Activated naive CD4-positive, alpha-beta T cell treated with anti-CD3 and anti-CD28 coated beads, Interleukin-2, amount 10 ng/mL, durations not matched to agents 7 days and 5 days (primary cell): ENCODE measurements at regions of chr3 and their contacts with region 1.

Region 1: DNA sequence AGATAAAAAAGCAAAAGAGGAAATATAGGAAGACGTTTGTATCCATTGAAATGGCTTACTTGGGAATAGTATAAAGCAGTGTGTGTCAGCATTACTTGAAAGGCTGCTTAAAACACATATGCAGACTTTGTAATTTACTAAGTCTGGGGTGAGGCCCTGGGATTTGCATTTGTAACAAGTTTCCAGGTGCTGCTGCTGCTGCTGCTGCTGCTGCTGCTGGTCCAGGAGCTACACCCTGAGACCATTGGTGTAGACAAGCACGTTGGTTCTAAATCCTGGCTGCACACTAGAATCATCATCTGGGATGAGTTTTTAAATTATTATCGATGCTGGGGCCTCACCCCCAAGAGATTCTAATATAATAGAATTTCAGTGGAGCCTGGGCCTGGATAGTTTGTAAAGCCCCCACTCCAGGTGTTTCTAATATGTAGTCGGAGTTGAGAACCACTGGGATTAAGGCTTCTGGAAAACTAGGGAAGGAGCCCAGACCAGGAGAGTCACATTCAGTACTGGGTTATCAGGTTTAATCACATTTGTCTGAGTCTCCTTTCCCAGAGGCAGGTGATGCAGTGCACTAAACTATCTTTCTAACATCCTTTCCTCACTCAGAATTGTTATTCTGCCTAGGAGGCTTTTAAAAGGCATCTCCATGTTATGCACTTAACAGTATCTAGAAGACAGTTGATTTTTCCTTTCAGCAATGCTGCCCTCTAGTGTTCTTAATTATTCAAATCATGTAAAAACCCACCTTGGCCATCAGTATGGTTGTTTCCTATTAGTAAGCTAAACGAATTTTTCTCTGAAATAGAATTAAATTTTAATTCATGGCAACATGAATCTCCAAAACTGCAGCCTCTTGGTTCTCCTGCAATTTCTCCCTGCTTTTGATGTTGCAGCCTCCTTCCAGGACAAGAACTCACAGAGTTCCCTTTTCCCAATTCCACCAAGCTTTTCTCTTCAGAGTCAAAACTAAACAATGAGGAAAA is 45.4 kb downstream of the SSR3 start:
- DNase-seq: no peak
- H3K4me3 Mint-ChIP-seq: no peak overlapping the region
- H3K27ac Mint-ChIP-seq: no peak overlapping the region
- H3K4me1 Mint-ChIP-seq: peaks cover 19% of the 10 kb centered on the region
- H3K27me3 Mint-ChIP-seq: peaks cover 25% of the 10 kb centered on the region

Region 2: GRCh38 chr3:156449712-156450574 is 59.5 kb before region 1 on chr3:
- CTCF ChIA-PET with region 1: interaction called, 56 read pairs
- DNase-seq: no peak
- H3K4me3 Mint-ChIP-seq: no peak overlapping the region
- H3K27ac Mint-ChIP-seq: no peak overlapping the region
- H3K4me1 Mint-ChIP-seq: no peaks in the 10 kb centered on the region
- H3K27me3 Mint-ChIP-seq: peaks cover 22% of the 10 kb centered on the region

Region 3: GRCh38 chr3:156474560-156475389 is 34.7 kb before region 1 on chr3:
- CTCF ChIA-PET with region 1: interaction called, 70 read pairs
- DNase-seq: no peak
- H3K4me3 Mint-ChIP-seq: no peak overlapping the region
- H3K27ac Mint-ChIP-seq: no peak overlapping the region
- H3K4me1 Mint-ChIP-seq: peaks cover 4% of the 10 kb centered on the region
- H3K27me3 Mint-ChIP-seq: peaks cover 51% of the 10 kb centered on the region

Region 4: DNA sequence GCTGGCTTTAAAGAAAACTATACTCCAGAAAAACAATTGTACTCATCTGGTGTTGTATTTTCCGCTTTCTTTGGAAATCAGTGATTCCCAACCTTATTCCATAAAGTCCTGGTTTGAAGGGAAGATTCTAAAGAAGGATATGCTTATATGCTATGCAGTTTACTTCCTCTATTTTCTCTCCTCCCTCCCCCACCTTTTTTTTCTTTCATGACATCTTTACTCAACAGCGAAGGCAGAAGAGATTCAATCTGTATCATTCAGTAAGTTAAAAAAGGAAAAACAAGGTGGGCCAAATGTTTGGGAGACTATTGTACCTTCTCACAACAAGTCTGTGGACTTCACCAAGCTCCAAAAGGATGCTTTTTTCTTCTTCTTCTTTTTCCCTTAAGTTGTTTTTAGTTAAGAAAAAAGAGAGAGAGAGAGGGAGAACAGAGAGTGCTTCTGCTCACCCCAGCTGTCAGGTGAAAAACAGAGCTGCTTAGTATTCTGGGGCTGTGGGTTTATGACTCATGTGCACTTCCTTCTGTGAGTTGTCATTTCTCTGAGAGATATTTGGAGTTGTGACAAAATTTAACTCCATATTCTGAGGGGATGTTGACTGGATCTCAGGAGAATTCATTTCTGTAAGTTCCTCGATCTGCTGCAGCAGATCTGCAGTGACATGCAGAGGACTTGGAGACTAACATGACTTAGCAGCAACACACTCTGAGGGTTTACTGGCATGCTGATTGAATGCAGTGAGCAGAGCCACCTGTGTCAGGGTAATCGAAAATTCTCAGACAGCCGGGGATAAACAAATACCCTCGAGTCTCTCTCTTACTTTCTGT is 25.3 kb before region 1 on chr3:
- CTCF ChIA-PET with region 1: interaction called, 70 read pairs
- DNase-seq: peak; percentile 63
- H3K4me3 Mint-ChIP-seq: peak overlapping the region; percentile 50
- H3K27ac Mint-ChIP-seq: peak overlapping the region; percentile 93
- H3K4me1 Mint-ChIP-seq: peaks cover 40% of the 10 kb centered on the region
- H3K27me3 Mint-ChIP-seq: peaks cover 2% of the 10 kb centered on the region

Region 5: GRCh38 chr3:156760333-156760732 is 250.9 kb after region 1 on chr3:
- CTCF ChIA-PET with region 1: no interaction called
- DNase-seq: no peak
- H3K4me3 Mint-ChIP-seq: no peak overlapping the region
- H3K27ac Mint-ChIP-seq: no peak overlapping the region
- H3K4me1 Mint-ChIP-seq: peaks cover 10% of the 10 kb centered on the region
- H3K27me3 Mint-ChIP-seq: no peaks in the 10 kb centered on the region